PC-9 (cell line): ENCODE measurements at regions of chr21 and their contacts with region 1.

Region 1: DNA sequence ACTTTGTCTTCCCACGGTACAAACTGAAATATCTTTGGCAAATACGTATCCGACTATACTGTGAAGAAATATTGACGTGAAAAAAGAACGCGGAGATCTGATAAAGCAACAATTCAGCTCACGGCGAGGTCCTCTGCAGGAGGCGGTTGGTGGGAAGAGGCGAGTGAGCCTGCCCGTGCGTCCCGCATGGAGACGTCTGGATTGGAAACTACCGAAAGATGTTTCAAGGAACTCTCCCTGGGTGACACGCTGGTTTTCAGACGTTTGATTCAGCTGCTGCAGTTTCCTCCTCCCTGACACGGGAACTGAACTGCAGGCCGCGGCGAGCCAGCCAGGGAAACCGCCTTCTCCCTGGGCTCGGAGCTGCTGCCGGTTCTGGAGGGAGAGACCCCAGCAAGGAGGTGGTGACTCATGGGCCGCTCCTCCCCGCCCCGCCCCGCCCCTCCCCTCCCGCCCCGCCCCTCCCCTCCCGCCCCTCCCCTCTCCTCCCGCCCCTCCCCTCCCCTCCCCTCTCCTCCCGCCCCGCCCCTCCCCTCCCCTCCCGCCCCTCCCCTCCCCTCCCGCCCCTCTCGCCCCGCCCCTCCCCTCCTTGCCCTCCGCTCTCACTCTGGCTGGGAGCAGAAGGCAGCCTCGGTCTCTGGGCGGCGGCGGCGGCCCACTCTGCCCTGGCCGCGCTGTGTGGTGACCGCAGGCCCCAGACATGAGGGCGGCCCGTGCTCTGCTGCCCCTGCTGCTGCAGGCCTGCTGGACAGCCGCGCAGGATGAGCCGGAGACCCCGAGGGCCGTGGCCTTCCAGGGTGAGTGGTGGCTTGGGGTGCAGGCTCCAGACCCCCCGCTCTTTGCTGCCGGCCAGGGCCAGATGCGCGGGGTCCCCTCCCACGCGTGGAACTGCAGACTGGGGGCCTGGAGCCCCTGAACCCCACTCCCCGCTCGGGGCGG is at the start of gene COL6A1:
- DNase-seq: peak; percentile 65 to 66
- H3K4me3 ChIP-seq: peak within 1 kb of the TSS; percentile 79
- H3K27ac ChIP-seq: peak within 1 kb of the TSS; percentile 14; the same call in 1 of the 2 replicates
- H3K4me1 ChIP-seq: peaks cover 4% of the 10 kb centered on the region; the same call in 1 of the 2 replicates
- H3K27me3 ChIP-seq: no peaks in the 10 kb centered on the region
- CTCF ChIP-seq: no peak; the same call in 1 of the 2 replicates
- total RNA-seq, gene COL6A1: 43.1 and 51.8 TPM in 2 replicates

Region 2: DNA sequence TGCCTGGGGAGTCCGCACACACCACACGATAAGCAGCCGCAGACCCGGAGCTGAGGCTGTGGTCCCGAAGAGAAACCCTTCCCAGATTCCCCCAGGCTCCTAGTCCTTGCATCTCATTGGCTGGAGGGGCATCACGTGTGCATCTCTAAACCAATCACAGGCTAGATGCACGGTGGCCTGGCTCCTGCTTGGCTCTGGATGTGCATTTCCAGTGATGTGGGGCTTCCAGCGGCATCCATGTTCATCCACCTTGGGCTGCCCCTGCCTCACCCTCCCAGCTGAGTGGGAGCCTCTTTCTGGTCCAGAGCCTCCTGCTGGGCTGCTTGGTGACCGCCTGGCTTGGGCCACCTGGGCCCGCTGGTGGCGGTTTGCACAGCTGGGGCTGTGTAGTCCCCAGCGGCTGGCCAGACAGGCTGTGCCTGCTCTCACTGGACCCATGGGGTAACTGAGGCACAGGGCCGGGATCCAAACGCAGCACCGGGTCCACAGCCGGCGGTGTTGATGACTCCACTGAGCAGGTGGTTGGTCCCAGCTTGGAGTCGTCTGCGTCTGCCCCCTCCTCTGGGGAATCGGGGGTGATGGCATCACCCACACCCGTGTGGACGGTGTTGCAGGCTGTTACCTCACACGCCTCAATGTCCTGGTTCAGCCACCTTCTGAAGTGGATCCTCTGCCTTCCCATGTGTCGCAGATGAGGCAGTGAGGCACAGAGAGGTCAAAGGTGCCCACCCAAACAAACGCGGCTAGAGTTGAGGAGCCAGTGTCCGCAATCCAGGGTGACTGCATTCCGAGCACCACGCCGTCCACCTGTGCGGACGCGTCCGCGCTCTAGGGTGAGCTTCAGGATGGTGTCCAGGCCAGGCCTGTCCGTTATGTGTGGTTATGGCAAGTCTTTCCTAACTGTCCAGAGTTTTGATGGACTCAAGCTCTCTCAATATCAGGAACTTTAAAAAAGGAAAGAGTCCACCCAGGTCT is 41.4 kb after region 1 on chr21:
- CTCF ChIA-PET with region 1: no interaction called
- POLR2A ChIA-PET with region 1: no interaction called
- intact Hi-C with region 1: no loop called
- DNase-seq: peak in 1 of 2 experiments; percentile 43
- H3K4me3 ChIP-seq: no peak overlapping the region
- H3K27ac ChIP-seq: no peak overlapping the region
- H3K4me1 ChIP-seq: peaks cover 14% of the 10 kb centered on the region
- H3K27me3 ChIP-seq: no peaks in the 10 kb centered on the region
- CTCF ChIP-seq: no peak

Region 3: DNA sequence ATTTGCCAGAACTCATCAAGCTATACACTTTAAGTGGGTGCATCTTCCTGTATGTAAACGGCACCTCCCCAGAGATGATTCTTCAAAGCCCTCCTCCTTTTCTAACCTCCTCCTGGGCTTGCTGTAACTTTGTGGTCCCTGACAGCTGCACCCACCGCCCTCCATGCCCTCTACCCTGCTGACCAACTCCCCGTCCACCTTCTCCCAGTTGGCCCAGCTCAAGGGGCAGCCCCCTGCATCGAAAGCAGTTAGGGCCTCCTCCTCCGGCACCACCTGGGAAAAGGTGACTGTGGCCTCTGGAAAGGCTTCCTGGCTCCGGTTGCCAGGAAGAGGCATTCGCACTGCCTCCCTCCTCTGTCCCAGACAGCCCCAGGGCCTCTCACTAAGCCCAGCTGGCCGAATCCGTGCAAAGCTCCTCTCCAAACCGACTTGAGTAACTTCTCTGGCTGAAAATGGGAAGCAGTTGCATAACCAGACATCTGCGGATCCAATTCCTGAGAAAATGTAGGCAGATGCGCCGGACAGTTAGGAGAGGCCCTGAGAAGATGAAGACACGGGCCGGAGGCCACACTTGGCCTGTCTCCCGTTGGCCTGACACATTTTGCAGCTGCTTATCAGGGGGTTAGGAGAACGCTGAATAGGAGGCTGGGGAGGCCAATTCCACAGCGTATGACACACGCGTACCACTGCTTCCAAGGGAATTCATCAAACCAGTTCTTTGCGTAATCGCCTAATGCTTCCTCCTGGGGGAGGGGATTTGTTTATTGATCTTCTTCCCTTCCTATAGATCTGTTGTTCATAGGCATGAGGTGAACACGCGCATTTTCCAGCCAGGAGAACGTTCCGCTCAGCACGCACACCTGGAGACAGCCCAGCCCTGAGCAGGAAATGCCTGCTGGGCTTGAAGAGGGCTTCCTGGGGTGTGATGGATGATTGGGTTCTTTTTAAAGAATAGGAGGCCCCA is 67.8 kb after region 1 on chr21:
- CTCF ChIA-PET with region 1: no interaction called
- POLR2A ChIA-PET with region 1: no interaction called
- intact Hi-C with region 1: loop called (anchors 10 kb)
- DNase-seq: peak; percentile 38 to 88
- H3K4me3 ChIP-seq: peak overlapping the region; percentile 36; the same call in 1 of the 2 replicates
- H3K27ac ChIP-seq: peak overlapping the region; percentile 88
- H3K4me1 ChIP-seq: peaks cover 39% of the 10 kb centered on the region
- H3K27me3 ChIP-seq: no peaks in the 10 kb centered on the region
- CTCF ChIP-seq: no peak